ENCODE measurements at regions of chr17 and their contacts with region 1.

Region 1: GRCh38 chr17:4908301-4908700 is 5.4 kb upstream of the CHRNE start:
- DNase-seq: peak; percentile 41
- ATAC-seq: peak; percentile 34
- H3K4me3 Mint-ChIP-seq: no peak overlapping the region
- H3K27ac Mint-ChIP-seq: no peak overlapping the region
- H3K4me1 Mint-ChIP-seq: peaks cover 4% of the 10 kb centered on the region
- H3K27me3 Mint-ChIP-seq: peaks cover 11% of the 10 kb centered on the region

Region 2: GRCh38 chr17:4891411-4892342 is 16.6 kb before region 1 on chr17:
- POLR2A ChIA-PET with region 1: no interaction called
- DNase-seq: no peak
- ATAC-seq: no peak
- H3K4me3 Mint-ChIP-seq: no peak overlapping the region
- H3K27ac Mint-ChIP-seq: no peak overlapping the region
- H3K4me1 Mint-ChIP-seq: no peaks in the 10 kb centered on the region
- H3K27me3 Mint-ChIP-seq: no peaks in the 10 kb centered on the region

Region 3: DNA sequence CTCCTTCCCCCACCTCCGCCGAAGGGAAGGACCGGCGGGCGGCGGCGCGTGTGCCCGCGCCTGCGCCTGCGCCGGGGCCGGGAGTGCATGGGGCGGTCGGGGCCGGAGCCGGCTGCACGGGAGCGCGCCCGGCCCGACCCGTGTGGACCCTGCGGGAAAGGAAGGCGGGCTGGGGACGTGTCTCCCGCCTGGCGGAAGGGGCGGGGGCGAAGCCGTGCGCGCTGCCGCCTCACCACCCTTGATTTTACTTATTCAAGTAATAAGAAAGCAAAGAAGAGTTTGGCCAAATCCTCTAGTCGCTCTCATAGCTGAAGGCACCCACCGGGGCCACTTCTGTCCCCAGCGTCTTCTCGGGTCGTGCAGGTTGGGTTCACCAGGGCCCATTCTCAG is 40.6 kb after region 1 on chr17:
- POLR2A ChIA-PET with region 1: interaction called, 12 read pairs
- DNase-seq: no peak
- ATAC-seq: peak; percentile 44
- H3K4me3 Mint-ChIP-seq: peak overlapping the region; percentile 100
- H3K27ac Mint-ChIP-seq: peak overlapping the region; percentile 100
- H3K4me1 Mint-ChIP-seq: peaks cover 31% of the 10 kb centered on the region
- H3K27me3 Mint-ChIP-seq: no peaks in the 10 kb centered on the region

Measured in activated naive CD8-positive, alpha-beta T cell treated with anti-CD3 and anti-CD28 coated beads, Interleukin-2, amount 10 ng/mL, durations not matched to agents 7 days and 5 days (primary cell).